Gastrocnemius medialis (tissue), 4 donors: ENCODE measurements at regions of chr2 and their contacts with region 1.

Region 1: DNA sequence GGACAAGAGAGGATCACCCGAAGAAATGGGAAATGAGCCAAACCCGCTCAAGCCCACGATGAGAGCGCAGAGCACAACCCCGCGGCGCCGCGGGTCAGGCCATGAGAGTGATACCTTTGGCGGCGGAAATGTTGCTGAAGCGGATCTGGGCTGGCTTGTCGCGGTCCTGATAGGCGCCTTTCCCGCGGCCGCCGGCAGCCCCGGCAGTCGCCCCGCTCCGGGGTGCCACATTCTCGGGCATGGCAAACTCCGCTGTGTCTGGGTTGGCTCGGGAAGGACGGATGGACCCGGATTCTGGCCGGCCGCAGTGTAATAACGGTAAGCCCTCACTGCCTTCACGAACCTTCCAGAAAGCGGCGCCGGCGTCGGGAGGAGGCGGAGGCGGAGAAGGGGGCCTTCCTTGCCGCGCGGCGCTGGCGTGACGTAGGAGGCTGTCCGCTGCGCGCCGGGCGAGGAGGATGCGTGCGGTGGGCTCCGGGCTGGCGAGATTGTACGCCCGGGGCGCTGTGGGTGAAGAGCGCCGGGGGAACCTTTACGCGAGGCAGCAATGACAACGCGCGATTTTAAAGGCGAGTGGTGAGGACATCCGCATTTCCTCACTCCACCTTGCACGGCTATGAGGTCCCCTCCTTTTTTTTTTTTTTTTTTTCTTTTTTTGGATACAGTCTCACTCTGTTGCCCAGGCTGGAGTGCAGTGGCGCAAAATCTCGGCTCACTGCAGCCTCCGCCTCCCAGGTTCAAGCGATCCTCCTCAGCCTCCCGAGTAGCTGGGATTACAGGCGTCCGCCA is at the start of gene CCT4:
- DNase-seq: peak; percentile 74 to 80
- ATAC-seq: peak; percentile 87 to 92
- H3K4me3 ChIP-seq: peak within 1 kb of the TSS; percentile 88 to 97 (median 90)
- H3K27ac ChIP-seq: peak within 1 kb of the TSS; percentile 90 to 94 (median 91)
- H3K4me1 ChIP-seq: peaks cover 11 to 18% of the 10 kb centered on the region in 2 donors
- H3K27me3 ChIP-seq: no peaks in the 10 kb centered on the region
- CTCF ChIP-seq: peak in 1 of 5 experiments; percentile 13
- POLR2A ChIP-seq: peak; percentile 71 to 75
- total RNA-seq, gene CCT4: 63.2 to 87.1 (median 75.5) TPM

Region 2: DNA sequence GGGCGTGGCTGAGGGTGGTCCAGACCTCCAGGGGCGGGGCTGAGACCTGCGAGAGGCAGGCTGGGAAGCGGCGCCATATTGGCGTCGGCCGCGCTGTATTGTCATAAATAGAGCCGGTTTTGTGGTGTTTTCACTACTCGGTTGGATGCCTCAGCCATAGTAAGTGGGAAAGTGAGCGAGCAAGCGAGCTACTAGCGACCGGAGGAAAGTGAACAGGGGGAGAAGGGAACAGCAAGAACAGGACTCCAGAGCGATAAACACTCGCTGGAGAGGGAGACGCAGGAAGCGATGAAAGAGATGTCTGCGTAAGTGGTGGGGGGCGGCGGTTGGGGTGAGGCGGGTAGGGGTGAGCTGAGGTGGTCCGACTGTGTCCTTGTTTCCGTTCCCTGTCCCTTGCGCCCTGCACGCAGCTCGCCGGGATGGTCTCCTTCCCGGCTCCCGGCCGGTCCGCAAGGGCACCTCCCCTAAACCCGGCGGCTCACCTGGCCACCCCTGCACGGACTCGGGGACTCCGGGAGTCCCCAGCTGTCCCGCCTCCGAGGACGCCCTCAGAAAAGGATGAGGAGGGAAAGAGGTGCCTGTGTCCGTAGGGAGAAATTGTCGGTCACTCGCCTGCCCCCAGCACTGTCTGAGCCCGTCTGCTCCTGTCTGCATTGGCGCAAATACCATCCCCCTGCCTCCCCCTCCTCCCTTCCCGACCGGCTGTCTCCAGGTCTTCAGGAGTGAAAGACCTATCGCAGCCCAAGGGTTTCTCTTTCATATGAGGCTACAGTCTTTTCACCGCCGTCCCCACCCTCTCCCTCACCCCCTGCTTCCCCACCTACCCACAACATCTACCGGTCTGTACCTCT is 1132.0 kb before region 1 on chr2 and contains the start of gene PAPOLG:
- in situ Hi-C with region 1: loop called in 1 of 4 experiments (anchors 25 kb)
- intact Hi-C with region 1: loop called (anchors 5 kb)
- DNase-seq: peak; percentile 92
- ATAC-seq: peak; percentile 96 to 97
- H3K4me3 ChIP-seq: peak within 1 kb of the TSS; percentile 75 to 100 (median 84)
- H3K27ac ChIP-seq: peak within 1 kb of the TSS; percentile 91 to 99 (median 94)
- H3K4me1 ChIP-seq: peaks cover 10 to 14% of the 10 kb centered on the region in 2 donors
- H3K27me3 ChIP-seq: no peaks in the 10 kb centered on the region
- CTCF ChIP-seq: no peak
- POLR2A ChIP-seq: peak; percentile 61 to 73
- total RNA-seq, gene PAPOLG: 8.4 to 13.6 (median 9.6) TPM

Region 3: DNA sequence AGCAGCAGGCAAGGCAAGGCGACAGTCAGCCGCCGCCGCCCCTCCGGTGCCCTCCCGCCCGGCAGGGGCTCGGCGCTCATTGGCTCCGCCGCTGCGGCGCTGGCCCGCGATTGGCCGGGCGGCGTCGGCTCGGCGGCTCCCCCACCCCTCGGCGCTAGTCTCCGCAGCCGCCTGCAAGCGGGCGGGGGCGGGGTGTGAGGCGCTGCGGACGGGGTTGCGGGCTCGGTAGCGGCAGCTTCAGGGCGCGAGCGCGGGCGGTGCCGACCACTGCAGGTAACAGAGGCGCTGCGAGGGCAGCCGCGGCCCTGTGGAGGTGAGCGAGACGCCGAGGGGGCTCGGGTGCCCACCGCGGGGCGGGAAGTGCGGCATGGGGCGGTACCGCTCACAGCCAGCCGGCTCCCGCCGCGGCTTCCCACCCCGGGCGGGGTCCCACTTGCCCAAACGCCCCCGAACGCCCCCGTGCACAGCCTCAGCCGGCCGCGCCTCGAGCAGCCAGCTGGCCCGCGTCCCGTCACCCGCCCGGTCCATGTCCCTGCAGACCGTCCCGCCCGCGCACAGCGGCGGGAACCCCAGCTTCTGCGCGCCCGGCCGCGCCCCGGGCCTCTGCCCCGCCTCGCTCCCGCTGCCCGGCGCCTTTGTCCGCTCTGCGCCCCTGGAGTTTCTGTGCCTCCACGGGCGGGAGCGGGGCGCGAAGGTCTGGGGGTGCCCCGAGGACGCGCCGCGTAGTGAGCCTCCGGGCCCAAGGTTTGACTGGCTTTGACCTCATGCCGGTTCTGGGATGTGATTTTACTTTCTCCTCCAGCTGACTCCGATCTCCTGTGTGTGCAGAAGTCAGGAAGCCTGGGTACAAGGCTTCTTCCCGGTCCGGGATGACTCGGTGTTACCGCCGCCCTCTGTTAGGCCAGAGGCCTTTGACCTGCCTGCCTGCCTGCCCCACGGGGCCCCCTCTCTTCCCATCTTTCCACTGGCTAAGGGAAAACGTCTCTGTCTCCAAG is 822.4 kb before region 1 on chr2 and contains the start of gene SANBR:
- in situ Hi-C with region 1: no loop called
- intact Hi-C with region 1: loop called (anchors 10 kb)
- DNase-seq: peak; percentile 77 to 87
- ATAC-seq: peak; percentile 93 to 94
- H3K4me3 ChIP-seq: peak within 1 kb of the TSS; percentile 66 to 94 (median 78)
- H3K27ac ChIP-seq: peak within 1 kb of the TSS; percentile 69 to 89 (median 85)
- H3K4me1 ChIP-seq: peaks cover 5 to 16% of the 10 kb centered on the region in 2 donors
- H3K27me3 ChIP-seq: no peaks in the 10 kb centered on the region
- CTCF ChIP-seq: peak in 2 of 5 experiments; percentile 8 to 37
- POLR2A ChIP-seq: peak; percentile 71 to 80
- total RNA-seq, gene SANBR: 1.5 to 6.5 (median 2.1) TPM

Region 4: GRCh38 chr2:61854474-61855182 is 33.8 kb before region 1 on chr2:
- in situ Hi-C with region 1: no loop called
- intact Hi-C with region 1: loop called (anchors 1 kb)
- DNase-seq: peak; percentile 90 to 93
- ATAC-seq: peak; percentile 97 to 98
- H3K4me3 ChIP-seq: peak overlapping the region; percentile 80 to 89 (median 82)
- H3K27ac ChIP-seq: peak overlapping the region; percentile 89 to 93 (median 90)
- H3K4me1 ChIP-seq: peaks cover 8 to 13% of the 10 kb centered on the region in 2 donors
- H3K27me3 ChIP-seq: no peaks in the 10 kb centered on the region
- CTCF ChIP-seq: no peak
- POLR2A ChIP-seq: no peak

Region 5: DNA sequence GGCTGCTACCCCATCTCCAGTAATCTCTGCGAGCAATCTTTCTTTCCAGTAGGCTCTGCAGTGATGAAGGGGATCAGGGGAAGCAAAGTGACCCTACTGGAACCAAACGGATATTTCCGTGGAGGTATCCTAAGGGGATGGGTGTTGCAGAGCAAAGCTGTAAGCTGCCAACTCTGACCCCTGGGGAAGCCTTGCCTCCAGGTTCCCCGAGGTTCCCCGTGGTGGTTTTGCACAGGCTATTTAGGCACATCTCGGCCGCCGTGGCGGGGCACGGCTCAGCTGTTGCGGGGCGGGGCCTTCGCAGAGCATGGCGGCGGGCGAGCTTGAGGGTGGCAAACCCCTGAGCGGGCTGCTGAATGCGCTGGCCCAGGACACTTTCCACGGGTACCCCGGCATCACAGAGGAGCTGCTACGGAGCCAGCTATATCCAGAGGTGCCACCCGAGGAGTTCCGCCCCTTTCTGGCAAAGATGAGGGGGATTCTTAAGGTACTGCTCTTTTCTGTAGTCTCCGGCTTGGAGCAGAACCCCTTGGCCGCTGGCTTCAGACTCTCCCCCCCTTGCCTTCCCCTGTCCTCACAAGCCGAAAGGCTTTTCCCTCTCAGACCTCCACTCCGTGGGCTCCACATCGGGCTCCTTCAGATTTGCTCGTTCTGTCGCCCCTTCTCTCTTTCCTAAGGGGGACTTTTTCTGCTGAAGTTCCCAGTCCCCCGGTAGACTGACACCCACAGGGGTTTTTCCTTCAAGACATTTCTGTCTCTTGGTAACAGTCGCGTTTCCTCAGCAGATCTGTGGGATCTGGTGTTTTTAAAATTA is 17.1 kb after region 1 on chr2 and contains the start of gene COMMD1:
- in situ Hi-C with region 1: no loop called
- intact Hi-C with region 1: loop called (anchors 2 kb)
- DNase-seq: peak; percentile 51 to 72
- ATAC-seq: peak; percentile 94 to 96
- H3K4me3 ChIP-seq: peak within 1 kb of the TSS; percentile 90 to 92 (median 90)
- H3K27ac ChIP-seq: peak within 1 kb of the TSS; percentile 81 to 89 (median 84)
- H3K4me1 ChIP-seq: peaks cover 5 to 19% of the 10 kb centered on the region in 2 donors
- H3K27me3 ChIP-seq: no peaks in the 10 kb centered on the region
- CTCF ChIP-seq: no peak
- POLR2A ChIP-seq: peak in 1 of 2 donors; percentile 39
- total RNA-seq, gene COMMD1: 51.8 to 78.6 (median 58.3) TPM

Region 6: GRCh38 chr2:62029912-62030311 is 141.5 kb after region 1 on chr2:
- in situ Hi-C with region 1: no loop called
- intact Hi-C with region 1: no loop called
- DNase-seq: no peak
- ATAC-seq: no peak
- H3K4me3 ChIP-seq: no peak overlapping the region
- H3K27ac ChIP-seq: no peak overlapping the region
- H3K4me1 ChIP-seq: peaks cover 19 to 25% of the 10 kb centered on the region in 2 donors
- H3K27me3 ChIP-seq: no peaks in the 10 kb centered on the region
- CTCF ChIP-seq: no peak
- POLR2A ChIP-seq: no peak

Region 7: DNA sequence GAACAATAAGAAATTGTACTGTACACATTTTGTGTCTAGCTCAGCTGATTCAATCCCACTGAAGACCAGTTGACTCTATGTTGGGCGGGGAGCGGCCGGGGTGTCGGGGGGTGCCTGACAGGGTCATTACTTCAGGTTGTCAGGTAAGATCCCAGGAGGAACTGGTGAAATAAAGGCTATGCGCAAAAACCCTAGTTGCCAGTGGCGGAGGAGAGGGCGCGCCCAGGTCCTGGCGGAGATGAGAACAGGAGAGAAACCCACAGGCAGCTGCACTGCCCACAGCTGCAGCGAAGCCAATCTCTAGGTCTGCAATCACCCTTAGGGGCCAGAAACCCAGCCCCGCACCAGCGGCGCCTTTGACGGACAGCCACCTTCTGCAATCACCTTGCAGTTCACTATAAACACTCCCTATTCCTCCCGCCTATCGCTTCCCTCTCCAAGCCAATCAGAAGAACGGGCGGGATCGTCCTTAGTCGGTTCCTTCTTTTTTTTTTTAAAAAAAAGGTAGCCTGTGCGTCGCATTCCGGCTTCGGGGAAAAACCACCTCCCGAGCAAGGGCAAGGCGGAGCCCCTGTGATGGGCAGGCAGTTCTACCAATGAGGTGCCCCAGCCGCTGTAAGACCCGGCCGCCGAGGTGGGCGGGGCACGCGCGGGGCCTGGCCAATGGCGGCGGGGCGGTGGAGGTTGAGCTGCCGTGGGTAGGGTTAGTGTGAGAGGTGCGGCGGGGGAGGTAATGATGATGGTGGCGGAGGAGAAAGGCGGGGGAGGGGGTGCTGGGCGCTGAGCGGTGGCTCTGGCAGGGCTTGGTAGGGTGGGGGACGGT is 816.8 kb after region 1 on chr2 and contains the start of gene EHBP1:
- in situ Hi-C with region 1: loop called in 2 of 4 experiments (anchors 25 kb)
- intact Hi-C with region 1: loop called (anchors 10 kb)
- DNase-seq: peak; percentile 98 to 99
- ATAC-seq: peak; percentile 96 to 97
- H3K4me3 ChIP-seq: peak within 1 kb of the TSS; percentile 82 to 100 (median 91)
- H3K27ac ChIP-seq: peak within 1 kb of the TSS; percentile 84 to 98 (median 94)
- H3K4me1 ChIP-seq: peaks cover 28 to 31% of the 10 kb centered on the region in 2 donors
- H3K27me3 ChIP-seq: no peaks in the 10 kb centered on the region
- CTCF ChIP-seq: no peak
- POLR2A ChIP-seq: peak; percentile 53 to 77
- total RNA-seq, gene EHBP1: 11.1 to 19.0 (median 15.4) TPM

Region 8: GRCh38 chr2:62844311-62845090 is 956.0 kb after region 1 on chr2:
- in situ Hi-C with region 1: no loop called
- intact Hi-C with region 1: no loop called
- DNase-seq: no peak
- ATAC-seq: no peak
- H3K4me3 ChIP-seq: no peak overlapping the region
- H3K27ac ChIP-seq: no peak overlapping the region
- H3K4me1 ChIP-seq: no peaks in the 10 kb centered on the region
- H3K27me3 ChIP-seq: no peaks in the 10 kb centered on the region
- CTCF ChIP-seq: no peak
- POLR2A ChIP-seq: no peak